ENCODE measurements at regions of chr16 and their contacts with region 1.

Region 1: GRCh38 chr16:20849587-20850390 is 43.5 kb downstream of the REXO5 start:
- DNase-seq: no peak
- ATAC-seq: peak; percentile 65
- H3K4me3 ChIP-seq: no peak overlapping the region
- H3K27ac ChIP-seq: no peak overlapping the region
- H3K4me1 ChIP-seq: no peaks in the 10 kb centered on the region
- H3K27me3 ChIP-seq: no peaks in the 10 kb centered on the region
- CTCF ChIP-seq: peak; percentile 98 to 99 (median 98)
- EP300 ChIP-seq: no peak
- POLR2A ChIP-seq: no peak
- RAD21 ChIP-seq: peak; percentile 100

Region 2: GRCh38 chr16:19463487-19463886 is 1386.3 kb before region 1 on chr16:
- CTCF ChIA-PET with region 1: no interaction called
- POLR2A ChIA-PET with region 1: no interaction called
- RAD21 ChIA-PET with region 1: no interaction called
- SMC1A ChIA-PET with region 1: no interaction called
- in situ Hi-C with region 1: no loop called
- intact Hi-C with region 1: no loop called
- DNase-seq: no peak
- ATAC-seq: no peak
- H3K4me3 ChIP-seq: no peak overlapping the region
- H3K27ac ChIP-seq: no peak overlapping the region
- H3K4me1 ChIP-seq: no peaks in the 10 kb centered on the region
- H3K27me3 ChIP-seq: no peaks in the 10 kb centered on the region
- CTCF ChIP-seq: no peak
- EP300 ChIP-seq: no peak
- POLR2A ChIP-seq: no peak
- RAD21 ChIP-seq: no peak

Region 3: GRCh38 chr16:20624882-20625807 is 224.6 kb before region 1 on chr16:
- CTCF ChIA-PET with region 1: no interaction called
- POLR2A ChIA-PET with region 1: no interaction called
- RAD21 ChIA-PET with region 1: no interaction called
- SMC1A ChIA-PET with region 1: no interaction called
- in situ Hi-C with region 1: no loop called
- intact Hi-C with region 1: no loop called
- DNase-seq: no peak
- ATAC-seq: no peak
- H3K4me3 ChIP-seq: no peak overlapping the region
- H3K27ac ChIP-seq: no peak overlapping the region
- H3K4me1 ChIP-seq: no peaks in the 10 kb centered on the region; the same call in 1 of the 2 replicates
- H3K27me3 ChIP-seq: no peaks in the 10 kb centered on the region
- CTCF ChIP-seq: no peak
- EP300 ChIP-seq: no peak
- POLR2A ChIP-seq: no peak
- RAD21 ChIP-seq: no peak

Region 4: GRCh38 chr16:20806168-20807050 is 43.4 kb before region 1 on chr16 and contains the starts of genes ERI2 and REXO5:
- CTCF ChIA-PET with region 1: interaction called, 6 read pairs
- POLR2A ChIA-PET with region 1: no interaction called
- RAD21 ChIA-PET with region 1: interaction called, 11 read pairs
- SMC1A ChIA-PET with region 1: interaction called, 7 read pairs
- in situ Hi-C with region 1: no loop called
- intact Hi-C with region 1: loop called (anchors 5 kb)
- DNase-seq: peak; percentile 59
- ATAC-seq: peak; percentile 92
- H3K4me3 ChIP-seq: peak within 1 kb of the TSS; percentile 88
- H3K27ac ChIP-seq: peak within 1 kb of the TSS; percentile 94
- H3K4me1 ChIP-seq: peaks cover 7% of the 10 kb centered on the region
- H3K27me3 ChIP-seq: no peaks in the 10 kb centered on the region
- CTCF ChIP-seq: peak; percentile 41 to 57 (median 56); a peak in 5 of 6 replicates
- EP300 ChIP-seq: no peak
- POLR2A ChIP-seq: peak; percentile 76
- RAD21 ChIP-seq: no peak
- polyA plus RNA-seq, gene ERI2: 7.7 to 7.8 TPM
- polyA plus RNA-seq, gene REXO5: 3.8 to 4.1 TPM

Region 5: GRCh38 chr16:20874088-20874581 is 24.3 kb after region 1 on chr16:
- CTCF ChIA-PET with region 1: interaction called, 24 read pairs
- POLR2A ChIA-PET with region 1: no interaction called
- RAD21 ChIA-PET with region 1: interaction called, 8 read pairs
- SMC1A ChIA-PET with region 1: interaction called, 50 read pairs
- in situ Hi-C with region 1: no loop called
- intact Hi-C with region 1: no loop called
- DNase-seq: no peak
- ATAC-seq: peak; percentile 9
- H3K4me3 ChIP-seq: peak overlapping the region; percentile 34; the same call in 1 of the 2 replicates
- H3K27ac ChIP-seq: peak overlapping the region; percentile 81
- H3K4me1 ChIP-seq: peaks cover 45% of the 10 kb centered on the region
- H3K27me3 ChIP-seq: no peaks in the 10 kb centered on the region
- CTCF ChIP-seq: no peak
- EP300 ChIP-seq: no peak
- POLR2A ChIP-seq: no peak
- RAD21 ChIP-seq: no peak

Region 6: DNA sequence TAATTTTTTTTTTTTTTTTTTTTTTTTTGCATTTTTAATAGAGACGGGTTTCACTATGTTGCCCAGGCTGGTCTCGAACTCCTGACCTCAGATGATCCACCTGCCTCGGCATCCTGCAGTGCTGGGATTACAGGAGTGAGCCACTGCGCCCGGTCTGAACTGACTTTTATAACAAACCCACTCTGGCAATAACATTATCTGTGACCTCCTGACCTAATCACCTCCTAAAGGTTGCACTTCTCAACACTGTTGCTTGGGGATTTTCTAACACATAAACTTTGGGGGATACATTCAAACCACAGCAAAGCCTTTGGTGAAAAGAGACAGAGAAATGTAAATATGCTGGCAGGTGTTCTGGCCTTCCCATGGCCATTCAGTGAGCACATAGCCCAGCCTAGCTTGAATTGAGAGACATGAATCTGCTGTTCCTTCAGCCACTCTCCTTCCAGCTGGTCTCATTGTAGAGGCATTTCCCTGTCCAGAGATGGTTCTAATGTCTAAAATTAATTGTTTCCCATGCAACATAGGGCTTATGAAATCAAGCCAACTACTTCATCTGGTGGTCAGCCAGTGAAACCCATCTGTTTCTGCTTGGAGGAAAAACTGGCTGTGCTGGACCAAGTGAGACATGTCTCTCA is 79.1 kb after region 1 on chr16:
- CTCF ChIA-PET with region 1: interaction called, 8 read pairs
- POLR2A ChIA-PET with region 1: no interaction called
- RAD21 ChIA-PET with region 1: no interaction called
- SMC1A ChIA-PET with region 1: interaction called, 10 read pairs
- in situ Hi-C with region 1: no loop called
- intact Hi-C with region 1: no loop called
- DNase-seq: no peak
- ATAC-seq: peak; percentile 72
- H3K4me3 ChIP-seq: no peak overlapping the region
- H3K27ac ChIP-seq: no peak overlapping the region
- H3K4me1 ChIP-seq: no peaks in the 10 kb centered on the region
- H3K27me3 ChIP-seq: no peaks in the 10 kb centered on the region
- CTCF ChIP-seq: no peak
- EP300 ChIP-seq: no peak
- POLR2A ChIP-seq: no peak
- RAD21 ChIP-seq: no peak

Region 7: GRCh38 chr16:21001262-21001661 is 151.5 kb after region 1 on chr16:
- CTCF ChIA-PET with region 1: interaction called, 56 read pairs
- POLR2A ChIA-PET with region 1: no interaction called
- RAD21 ChIA-PET with region 1: interaction called, 7 read pairs
- SMC1A ChIA-PET with region 1: interaction called, 34 read pairs
- in situ Hi-C with region 1: loop called (anchors 5 kb)
- intact Hi-C with region 1: loop called (anchors 2 kb)
- DNase-seq: no peak
- ATAC-seq: peak; percentile 71
- H3K4me3 ChIP-seq: no peak overlapping the region
- H3K27ac ChIP-seq: no peak overlapping the region
- H3K4me1 ChIP-seq: no peaks in the 10 kb centered on the region
- H3K27me3 ChIP-seq: no peaks in the 10 kb centered on the region
- CTCF ChIP-seq: peak; percentile 43 to 58 (median 43); a peak in 5 of 6 replicates
- EP300 ChIP-seq: no peak
- POLR2A ChIP-seq: no peak
- RAD21 ChIP-seq: no peak

Region 8: GRCh38 chr16:21083729-21084268 is 234.0 kb after region 1 on chr16:
- CTCF ChIA-PET with region 1: interaction called, 58 read pairs
- POLR2A ChIA-PET with region 1: interaction called, 3 read pairs
- RAD21 ChIA-PET with region 1: interaction called, 13 read pairs
- SMC1A ChIA-PET with region 1: interaction called, 22 read pairs
- in situ Hi-C with region 1: loop called (anchors 5 kb)
- intact Hi-C with region 1: loop called (anchors 2 kb)
- DNase-seq: no peak
- ATAC-seq: peak; percentile 92
- H3K4me3 ChIP-seq: no peak overlapping the region
- H3K27ac ChIP-seq: no peak overlapping the region
- H3K4me1 ChIP-seq: no peaks in the 10 kb centered on the region
- H3K27me3 ChIP-seq: no peaks in the 10 kb centered on the region
- CTCF ChIP-seq: peak; percentile 67 to 76 (median 71)
- EP300 ChIP-seq: no peak
- POLR2A ChIP-seq: no peak
- RAD21 ChIP-seq: peak; percentile 87

Measured in GM12878 (cell line).